MCF 10A (cell line): ENCODE measurements at regions of chr3 and their contacts with region 1.

Region 1: DNA sequence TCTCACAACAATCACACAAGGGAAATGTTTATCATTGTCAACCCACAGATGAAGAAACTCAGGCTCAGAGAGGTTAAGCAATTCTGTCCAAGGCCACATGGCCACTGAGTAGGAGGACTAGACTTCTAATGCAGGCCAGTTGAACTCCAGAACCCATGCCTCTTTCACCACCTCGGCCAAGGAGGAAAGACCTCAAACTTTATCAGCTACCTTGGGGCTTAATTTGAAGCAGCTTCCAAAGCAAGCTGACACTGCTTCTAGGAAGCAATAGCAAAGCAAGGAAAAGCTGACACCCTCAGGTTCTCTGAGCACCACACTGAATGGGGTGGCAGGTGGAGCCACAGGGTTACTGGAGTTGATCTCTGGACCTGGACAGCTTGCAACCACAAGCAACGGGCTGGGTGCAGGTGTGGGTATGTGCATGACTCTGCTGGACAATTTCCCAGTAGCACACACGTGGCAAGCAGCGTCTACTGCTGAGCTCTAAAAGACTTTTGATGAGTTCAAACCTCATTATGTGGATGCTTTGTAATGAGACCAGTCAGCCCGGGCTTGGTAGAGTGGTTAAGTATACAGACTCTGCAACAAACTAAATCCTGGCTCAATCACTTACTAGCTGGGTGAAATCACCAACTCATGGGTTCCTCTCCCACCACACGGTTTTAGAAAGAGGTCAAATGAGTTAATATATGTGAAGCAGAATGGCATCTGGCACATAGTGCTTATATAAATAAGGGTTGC is 23.1 kb downstream of the CCNL1 start:
- DNase-seq: peak; percentile 35
- H3K4me3 Mint-ChIP-seq: no peak overlapping the region
- H3K27ac Mint-ChIP-seq: no peak overlapping the region
- H3K4me1 Mint-ChIP-seq: peaks cover 27% of the 10 kb centered on the region
- H3K27me3 Mint-ChIP-seq: no peaks in the 10 kb centered on the region
- CTCF ChIP-seq: no peak

Region 2: DNA sequence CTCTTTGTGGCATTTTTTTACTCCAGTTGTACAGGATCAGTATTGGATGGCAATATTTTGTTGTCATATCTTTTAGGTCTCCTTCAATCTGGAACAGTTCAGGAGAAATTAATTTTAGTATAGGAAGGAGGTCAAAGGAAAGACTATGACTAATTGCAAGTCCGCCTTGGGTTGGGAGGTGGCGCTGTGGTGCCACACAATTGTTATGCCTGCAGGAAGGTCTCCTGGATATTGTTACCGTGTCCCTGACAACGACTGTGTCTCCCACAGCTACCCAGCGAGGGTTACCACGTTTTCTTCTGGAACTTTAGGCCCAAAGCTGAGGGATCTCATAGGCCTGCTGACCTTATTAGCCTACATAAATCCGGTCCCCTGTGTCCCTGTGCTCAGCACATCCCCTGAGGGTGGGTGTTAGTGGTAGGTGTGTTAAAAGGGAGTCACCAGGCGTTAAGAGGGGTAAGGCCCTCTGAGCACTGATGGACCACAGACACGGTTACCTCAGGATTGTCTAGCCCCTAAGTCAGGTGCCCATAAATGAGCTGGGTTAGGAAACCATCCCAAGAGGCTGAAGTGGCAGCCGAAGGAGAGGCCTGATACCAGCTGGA is 984.9 kb before region 1 on chr3:
- CTCF ChIA-PET with region 1: interaction called, 27 read pairs
- POLR2A ChIA-PET with region 1: no interaction called
- intact Hi-C with region 1: loop called (anchors 1 kb)
- DNase-seq: peak; percentile 69
- H3K4me3 Mint-ChIP-seq: no peak overlapping the region
- H3K27ac Mint-ChIP-seq: no peak overlapping the region
- H3K4me1 Mint-ChIP-seq: no peaks in the 10 kb centered on the region
- H3K27me3 Mint-ChIP-seq: no peaks in the 10 kb centered on the region
- CTCF ChIP-seq: peak; percentile 74

Region 3: GRCh38 chr3:156547637-156548036 is 589.2 kb before region 1 on chr3:
- CTCF ChIA-PET with region 1: interaction called, 13 read pairs
- POLR2A ChIA-PET with region 1: interaction called, 7 read pairs
- intact Hi-C with region 1: no loop called
- DNase-seq: no peak
- H3K4me3 Mint-ChIP-seq: no peak overlapping the region
- H3K27ac Mint-ChIP-seq: peak overlapping the region; percentile 30
- H3K4me1 Mint-ChIP-seq: peaks cover 22% of the 10 kb centered on the region
- H3K27me3 Mint-ChIP-seq: no peaks in the 10 kb centered on the region
- CTCF ChIP-seq: no peak

Region 4: GRCh38 chr3:156826144-156826895 is 310.5 kb before region 1 on chr3 and contains the start of gene LEKR1:
- CTCF ChIA-PET with region 1: interaction called, 4 read pairs
- POLR2A ChIA-PET with region 1: interaction called, 5 read pairs
- intact Hi-C with region 1: loop called (anchors 2 kb)
- DNase-seq: peak; percentile 88
- H3K4me3 Mint-ChIP-seq: peak within 1 kb of the TSS; percentile 94
- H3K27ac Mint-ChIP-seq: peak within 1 kb of the TSS; percentile 98
- H3K4me1 Mint-ChIP-seq: no peaks in the 10 kb centered on the region
- H3K27me3 Mint-ChIP-seq: no peaks in the 10 kb centered on the region
- CTCF ChIP-seq: no peak
- total RNA-seq, gene LEKR1: 1.3 and 2.2 TPM in 2 replicates

Region 5: GRCh38 chr3:157051591-157051990 is 85.2 kb before region 1 on chr3:
- CTCF ChIA-PET with region 1: no interaction called
- POLR2A ChIA-PET with region 1: no interaction called
- intact Hi-C with region 1: no loop called
- DNase-seq: no peak
- H3K4me3 Mint-ChIP-seq: no peak overlapping the region
- H3K27ac Mint-ChIP-seq: no peak overlapping the region
- H3K4me1 Mint-ChIP-seq: no peaks in the 10 kb centered on the region
- H3K27me3 Mint-ChIP-seq: no peaks in the 10 kb centered on the region
- CTCF ChIP-seq: no peak

Region 6: DNA sequence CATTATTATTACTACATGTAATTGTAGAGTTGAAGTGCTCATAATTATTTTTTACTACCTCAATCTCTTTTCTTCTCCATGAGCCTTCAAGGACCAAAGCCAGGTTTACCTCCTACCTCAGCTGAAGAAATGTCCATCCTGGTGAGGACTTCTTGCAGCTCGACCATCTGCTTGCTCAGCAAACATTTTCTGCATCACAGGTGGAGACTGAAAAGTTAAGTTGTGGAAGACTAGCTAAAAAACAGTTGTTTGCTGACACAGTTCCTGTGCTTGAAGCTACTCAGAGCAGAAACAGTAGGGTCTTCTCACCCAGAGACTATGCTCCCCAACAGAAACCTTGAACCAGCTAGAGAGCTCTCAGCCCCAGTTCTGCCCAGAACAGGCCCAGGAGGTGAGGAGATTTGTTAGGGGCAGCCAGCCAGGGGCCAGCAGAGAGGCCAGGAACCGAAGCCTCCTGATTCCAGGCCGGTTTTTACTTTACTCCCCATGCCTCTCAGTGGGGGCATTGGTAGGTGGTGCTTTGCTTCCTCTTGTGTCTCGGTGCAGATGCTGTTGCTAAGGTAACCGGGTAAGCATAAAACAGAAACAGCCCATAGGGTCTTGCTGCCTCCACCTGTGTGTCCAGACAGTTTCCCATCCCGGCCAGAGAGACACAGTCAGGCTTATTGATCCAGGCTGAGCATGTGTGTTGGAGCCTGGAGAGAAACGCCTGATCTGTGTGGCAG is 31.7 kb before region 1 on chr3:
- CTCF ChIA-PET with region 1: interaction called, 25 read pairs
- POLR2A ChIA-PET with region 1: interaction called, 11 read pairs
- intact Hi-C with region 1: no loop called
- DNase-seq: no peak
- H3K4me3 Mint-ChIP-seq: no peak overlapping the region
- H3K27ac Mint-ChIP-seq: peak overlapping the region; percentile 10
- H3K4me1 Mint-ChIP-seq: peaks cover 18% of the 10 kb centered on the region
- H3K27me3 Mint-ChIP-seq: no peaks in the 10 kb centered on the region
- CTCF ChIP-seq: no peak

Region 7: DNA sequence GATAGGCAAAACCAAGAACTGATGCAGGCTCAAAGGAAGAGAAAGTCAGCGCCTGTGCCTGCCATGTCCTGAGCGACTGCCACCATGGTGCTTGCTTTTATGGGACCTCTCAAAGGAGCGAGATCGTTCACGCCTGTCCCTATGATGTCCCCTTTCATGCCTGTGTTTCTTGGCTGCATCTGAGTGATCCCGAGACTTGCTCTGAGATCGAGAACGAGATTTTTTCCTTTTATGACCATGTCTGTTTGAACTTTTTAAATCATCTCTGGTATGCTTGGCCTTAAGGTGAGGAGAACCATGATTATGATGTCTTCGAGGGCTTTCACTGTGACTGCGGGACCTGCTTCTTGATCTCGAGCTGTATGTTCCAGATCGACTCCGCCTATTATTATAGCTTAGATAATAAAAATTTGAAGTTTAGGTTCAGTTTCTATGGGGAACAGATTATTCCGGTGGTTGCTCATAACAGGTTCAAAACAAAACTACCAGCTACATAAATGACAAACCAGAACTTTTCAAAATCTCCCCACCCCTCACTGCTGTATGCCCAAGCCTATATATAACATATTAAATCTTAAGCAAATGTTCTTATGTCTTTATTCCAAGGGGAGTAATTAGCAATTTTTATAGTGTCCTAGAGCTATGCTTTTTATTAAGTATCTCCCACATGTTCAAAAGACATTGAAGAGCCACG is 11.5 kb after region 1 on chr3:
- CTCF ChIA-PET with region 1: interaction called, 18 read pairs
- POLR2A ChIA-PET with region 1: interaction called, 7 read pairs
- intact Hi-C with region 1: no loop called
- DNase-seq: no peak
- H3K4me3 Mint-ChIP-seq: no peak overlapping the region
- H3K27ac Mint-ChIP-seq: no peak overlapping the region
- H3K4me1 Mint-ChIP-seq: peaks cover 4% of the 10 kb centered on the region
- H3K27me3 Mint-ChIP-seq: no peaks in the 10 kb centered on the region
- CTCF ChIP-seq: no peak

Region 8: DNA sequence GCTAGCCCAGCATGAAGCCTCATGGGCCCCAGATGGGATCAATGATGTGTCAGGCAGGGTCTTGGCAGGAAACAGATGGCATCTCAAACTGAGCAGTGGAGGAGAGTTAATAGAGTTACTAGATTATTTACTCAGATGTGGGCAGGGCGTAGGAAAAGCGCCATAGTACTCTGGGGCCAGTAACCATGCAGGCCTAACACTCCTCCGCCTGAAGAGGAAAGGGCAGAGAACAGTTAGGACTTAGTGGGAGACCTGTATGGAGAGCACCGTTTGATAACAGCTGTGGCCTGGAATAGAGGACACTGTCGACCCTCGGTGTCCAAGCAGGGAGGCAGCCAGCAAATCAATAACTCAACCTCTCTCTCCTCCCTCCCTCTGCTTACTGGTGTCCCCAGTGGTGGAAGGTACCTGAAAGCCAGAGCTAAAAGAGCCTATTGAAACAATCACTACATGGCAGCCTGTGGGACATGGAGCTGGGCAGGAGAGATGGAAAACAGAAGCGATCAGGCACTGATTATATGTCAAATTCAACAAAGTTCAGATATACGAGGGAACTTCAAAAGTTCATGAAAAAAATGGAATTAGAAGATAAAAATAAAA is 134.6 kb after region 1 on chr3:
- CTCF ChIA-PET with region 1: no interaction called
- POLR2A ChIA-PET with region 1: no interaction called
- intact Hi-C with region 1: no loop called
- DNase-seq: no peak
- H3K4me3 Mint-ChIP-seq: no peak overlapping the region
- H3K27ac Mint-ChIP-seq: no peak overlapping the region
- H3K4me1 Mint-ChIP-seq: no peaks in the 10 kb centered on the region
- H3K27me3 Mint-ChIP-seq: no peaks in the 10 kb centered on the region
- CTCF ChIP-seq: no peak